CD4-positive, alpha-beta T cell (primary cell): ENCODE measurements at regions of chr1 and their contacts with region 1.

Region 1: GRCh38 chr1:40257688-40258444 is at the start of gene ZMPSTE24:
- DNase-seq: peak; percentile 93 to 99 (median 95)
- ATAC-seq: peak; percentile 95
- H3K4me3 ChIP-seq: peak within 1 kb of the TSS; percentile 86
- H3K4me3 Mint-ChIP-seq: peak within 1 kb of the TSS; percentile 95
- H3K27ac ChIP-seq: peak within 1 kb of the TSS; percentile 95 to 99
- H3K27ac Mint-ChIP-seq: peak within 1 kb of the TSS; percentile 99
- H3K4me1 ChIP-seq: peaks cover 27% of the 10 kb centered on the region
- H3K4me1 Mint-ChIP-seq: peaks cover 56% of the 10 kb centered on the region
- H3K27me3 ChIP-seq: no peaks in the 10 kb centered on the region
- H3K27me3 Mint-ChIP-seq: no peaks in the 10 kb centered on the region
- CTCF ChIP-seq: no peak
- total RNA-seq, gene ZMPSTE24: 8.7 to 8.8 TPM

Region 2: DNA sequence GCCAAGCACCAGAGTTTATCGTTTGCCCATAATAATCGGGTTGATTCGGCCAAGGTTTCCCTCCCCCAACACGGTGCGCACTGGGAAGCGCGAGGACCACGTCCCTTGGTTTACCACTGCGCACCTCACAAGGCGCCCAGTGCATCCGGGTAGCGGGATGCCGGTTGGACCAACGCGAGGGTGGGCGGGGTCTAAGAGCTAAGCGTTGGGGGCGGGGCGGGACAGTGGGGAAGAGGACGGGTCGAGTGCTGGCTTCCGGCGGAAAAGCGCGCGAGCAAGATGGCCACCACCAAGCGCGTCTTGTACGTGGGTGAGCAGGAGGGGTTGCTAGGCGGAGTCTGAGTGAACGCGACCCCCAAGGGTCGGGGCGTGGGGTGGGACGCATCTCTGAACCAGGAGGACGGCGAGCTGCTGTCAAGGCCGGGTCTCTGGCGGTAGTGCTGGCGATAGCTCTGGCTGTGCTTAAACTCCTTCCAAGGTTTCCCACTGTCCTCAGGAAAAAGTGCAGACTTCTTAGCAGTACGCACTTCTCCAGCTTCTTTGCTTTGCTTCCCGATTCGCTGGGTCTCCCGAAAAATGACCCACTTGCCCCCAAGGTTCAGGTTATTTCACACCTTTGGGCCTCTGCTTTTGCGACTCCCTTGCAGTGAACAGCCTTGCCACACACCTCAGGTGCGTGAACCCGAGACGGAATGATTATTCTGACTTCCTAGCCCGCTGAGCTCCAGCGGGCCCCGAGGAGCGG is 519.1 kb before region 1 on chr1 and contains the start of gene PPIE:
- CTCF ChIA-PET with region 1: no interaction called
- POLR2A ChIA-PET with region 1: no interaction called
- intact Hi-C with region 1: loop called in 1 of 2 experiments (anchors 5 kb)
- DNase-seq: peak; percentile 89 to 97 (median 95)
- ATAC-seq: peak; percentile 98
- H3K4me3 ChIP-seq: peak within 1 kb of the TSS; percentile 96
- H3K4me3 Mint-ChIP-seq: peak within 1 kb of the TSS; percentile 96
- H3K27ac ChIP-seq: peak within 1 kb of the TSS; percentile 71 to 81
- H3K27ac Mint-ChIP-seq: peak within 1 kb of the TSS; percentile 87
- H3K4me1 ChIP-seq: peaks cover 21% of the 10 kb centered on the region
- H3K4me1 Mint-ChIP-seq: peaks cover 34% of the 10 kb centered on the region
- H3K27me3 ChIP-seq: peaks cover 8 to 19% of the 10 kb centered on the region in 2 experiments
- H3K27me3 Mint-ChIP-seq: peaks cover 28% of the 10 kb centered on the region
- CTCF ChIP-seq: no peak
- total RNA-seq, gene PPIE: 45.0 to 46.7 TPM

Region 3: DNA sequence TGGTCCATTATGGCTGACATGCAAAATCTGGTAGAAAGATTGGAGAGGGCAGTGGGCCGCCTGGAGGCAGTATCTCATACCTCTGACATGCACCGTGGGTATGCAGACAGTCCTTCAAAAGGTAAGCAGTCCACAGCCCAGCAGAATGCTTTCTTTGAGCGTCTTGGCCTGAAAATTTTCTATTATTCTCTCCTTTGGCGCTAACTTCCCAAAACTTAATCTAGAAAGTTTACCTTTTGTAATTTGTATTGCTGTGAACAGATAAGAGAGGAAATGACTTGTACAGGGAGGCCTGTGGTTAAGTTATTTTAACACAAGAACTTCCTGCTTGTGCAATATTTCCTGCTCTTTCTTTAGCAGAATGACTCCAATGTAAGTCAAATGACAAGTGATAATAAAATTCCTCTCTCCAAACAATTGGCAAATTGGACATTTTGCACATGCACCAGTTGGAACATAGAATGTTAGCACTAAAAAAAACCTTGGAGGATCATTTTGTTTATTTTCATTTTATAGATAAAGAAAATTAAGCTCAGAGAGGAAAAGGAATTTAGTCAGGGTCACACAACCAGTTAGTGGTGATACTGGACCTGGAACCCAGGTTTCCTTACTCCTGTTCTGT is 198.4 kb before region 1 on chr1:
- CTCF ChIA-PET with region 1: no interaction called
- POLR2A ChIA-PET with region 1: no interaction called
- intact Hi-C with region 1: loop called in 1 of 2 experiments (anchors 5 kb)
- DNase-seq: peak in 3 of 14 experiments; percentile 47 to 80 (median 64)
- ATAC-seq: peak; percentile 83
- H3K4me3 ChIP-seq: peak overlapping the region; percentile 30
- H3K4me3 Mint-ChIP-seq: peak overlapping the region; percentile 88
- H3K27ac ChIP-seq: peak overlapping the region; percentile 59 to 62
- H3K27ac Mint-ChIP-seq: peak overlapping the region; percentile 95
- H3K4me1 ChIP-seq: peaks cover 74% of the 10 kb centered on the region
- H3K4me1 Mint-ChIP-seq: peaks cover 96% of the 10 kb centered on the region
- H3K27me3 ChIP-seq: no peaks in the 10 kb centered on the region
- H3K27me3 Mint-ChIP-seq: no peaks in the 10 kb centered on the region
- CTCF ChIP-seq: peak; percentile 2

Region 4: GRCh38 chr1:40241362-40241761 is 16.5 kb before region 1 on chr1:
- CTCF ChIA-PET with region 1: interaction called, 3 read pairs
- POLR2A ChIA-PET with region 1: interaction called, 15 read pairs
- intact Hi-C with region 1: no loop called
- DNase-seq: no peak
- ATAC-seq: peak; percentile 11
- H3K4me3 ChIP-seq: no peak overlapping the region
- H3K4me3 Mint-ChIP-seq: no peak overlapping the region
- H3K27ac ChIP-seq: no peak overlapping the region
- H3K27ac Mint-ChIP-seq: peak overlapping the region; percentile 31
- H3K4me1 ChIP-seq: peaks cover 7% of the 10 kb centered on the region
- H3K4me1 Mint-ChIP-seq: peaks cover 11% of the 10 kb centered on the region
- H3K27me3 ChIP-seq: no peaks in the 10 kb centered on the region
- H3K27me3 Mint-ChIP-seq: no peaks in the 10 kb centered on the region
- CTCF ChIP-seq: no peak

Region 5: GRCh38 chr1:40373338-40374283 is 115.7 kb after region 1 on chr1 and contains the start of gene SMAP2:
- CTCF ChIA-PET with region 1: no interaction called
- POLR2A ChIA-PET with region 1: interaction called, 9 read pairs
- intact Hi-C with region 1: loop called in 1 of 2 experiments (anchors 10 kb)
- DNase-seq: peak; percentile 89 to 98 (median 95)
- ATAC-seq: peak; percentile 78
- H3K4me3 ChIP-seq: peak within 1 kb of the TSS; percentile 89
- H3K4me3 Mint-ChIP-seq: peak within 1 kb of the TSS; percentile 100
- H3K27ac ChIP-seq: peak within 1 kb of the TSS; percentile 93 to 99
- H3K27ac Mint-ChIP-seq: peak within 1 kb of the TSS; percentile 99
- H3K4me1 ChIP-seq: peaks cover 36% of the 10 kb centered on the region
- H3K4me1 Mint-ChIP-seq: peaks cover 58% of the 10 kb centered on the region
- H3K27me3 ChIP-seq: no peaks in the 10 kb centered on the region
- H3K27me3 Mint-ChIP-seq: peaks cover 7% of the 10 kb centered on the region
- CTCF ChIP-seq: no peak
- total RNA-seq, gene SMAP2: 214 to 216 TPM

Region 6: GRCh38 chr1:40531381-40532061 is 273.7 kb after region 1 on chr1 and contains the start of gene ZNF684:
- CTCF ChIA-PET with region 1: no interaction called
- POLR2A ChIA-PET with region 1: interaction called, 6 read pairs
- intact Hi-C with region 1: loop called in 1 of 2 experiments (anchors 5 kb)
- DNase-seq: peak; percentile 65 to 96 (median 77)
- ATAC-seq: peak; percentile 94
- H3K4me3 ChIP-seq: peak within 1 kb of the TSS; percentile 80
- H3K4me3 Mint-ChIP-seq: peak within 1 kb of the TSS; percentile 95
- H3K27ac ChIP-seq: peak within 1 kb of the TSS; percentile 69 to 71
- H3K27ac Mint-ChIP-seq: peak within 1 kb of the TSS; percentile 78
- H3K4me1 ChIP-seq: peaks cover 12% of the 10 kb centered on the region
- H3K4me1 Mint-ChIP-seq: peaks cover 28% of the 10 kb centered on the region
- H3K27me3 ChIP-seq: no peaks in the 10 kb centered on the region
- H3K27me3 Mint-ChIP-seq: peaks cover 7% of the 10 kb centered on the region
- CTCF ChIP-seq: no peak
- total RNA-seq, gene ZNF684: 1.3 to 1.7 TPM